Calu3 (cell line): ENCODE measurements at regions of chr1 and their contacts with region 1.

Region 1: DNA sequence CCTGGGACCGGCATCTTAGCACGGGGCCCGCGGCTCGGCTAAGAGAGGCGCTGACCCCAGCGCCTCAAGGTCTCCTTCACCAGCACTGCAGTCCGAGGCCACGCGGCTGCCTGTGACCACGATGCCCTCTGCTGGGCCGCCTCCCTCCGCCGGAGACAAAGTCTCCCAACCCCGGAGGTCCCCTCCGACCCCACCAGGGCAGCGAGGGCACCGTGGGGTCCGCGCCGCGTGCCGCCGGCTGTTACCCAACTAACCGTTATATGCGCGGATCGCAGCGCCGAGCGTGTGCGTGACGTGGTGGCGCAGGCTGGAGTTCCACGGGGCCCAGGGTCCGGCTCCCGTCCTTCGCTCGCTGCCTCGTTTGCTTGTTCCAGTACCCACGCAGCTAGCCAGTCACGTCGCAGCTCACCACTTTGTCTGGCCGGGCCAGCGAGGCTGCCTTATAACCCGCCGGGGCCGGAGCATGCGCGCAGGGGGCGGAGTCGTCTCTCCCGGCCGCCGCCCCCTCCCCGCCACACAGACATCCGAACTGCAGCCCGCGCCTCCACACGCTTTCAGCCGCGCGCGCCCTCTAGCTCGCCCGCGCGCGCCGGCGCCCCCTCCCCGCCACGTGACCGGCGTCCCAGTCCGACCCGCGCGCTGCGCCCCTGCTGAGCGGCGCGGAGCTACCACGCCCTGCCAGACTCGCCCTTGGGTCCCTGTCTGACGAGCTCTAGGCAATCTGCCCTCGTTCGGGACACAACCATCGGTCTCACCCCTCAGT is at the start of gene SLC16A1:
- DNase-seq: peak; percentile 87
- H3K4me3 Mint-ChIP-seq: peak within 1 kb of the TSS; percentile 100
- H3K27ac Mint-ChIP-seq: peak within 1 kb of the TSS; percentile 2
- H3K4me1 Mint-ChIP-seq: peaks cover 24% of the 10 kb centered on the region
- H3K27me3 Mint-ChIP-seq: no peaks in the 10 kb centered on the region
- CTCF ChIP-seq: no peak
- total RNA-seq, gene SLC16A1: 59.2 and 60.3 TPM in 2 replicates

Region 2: DNA sequence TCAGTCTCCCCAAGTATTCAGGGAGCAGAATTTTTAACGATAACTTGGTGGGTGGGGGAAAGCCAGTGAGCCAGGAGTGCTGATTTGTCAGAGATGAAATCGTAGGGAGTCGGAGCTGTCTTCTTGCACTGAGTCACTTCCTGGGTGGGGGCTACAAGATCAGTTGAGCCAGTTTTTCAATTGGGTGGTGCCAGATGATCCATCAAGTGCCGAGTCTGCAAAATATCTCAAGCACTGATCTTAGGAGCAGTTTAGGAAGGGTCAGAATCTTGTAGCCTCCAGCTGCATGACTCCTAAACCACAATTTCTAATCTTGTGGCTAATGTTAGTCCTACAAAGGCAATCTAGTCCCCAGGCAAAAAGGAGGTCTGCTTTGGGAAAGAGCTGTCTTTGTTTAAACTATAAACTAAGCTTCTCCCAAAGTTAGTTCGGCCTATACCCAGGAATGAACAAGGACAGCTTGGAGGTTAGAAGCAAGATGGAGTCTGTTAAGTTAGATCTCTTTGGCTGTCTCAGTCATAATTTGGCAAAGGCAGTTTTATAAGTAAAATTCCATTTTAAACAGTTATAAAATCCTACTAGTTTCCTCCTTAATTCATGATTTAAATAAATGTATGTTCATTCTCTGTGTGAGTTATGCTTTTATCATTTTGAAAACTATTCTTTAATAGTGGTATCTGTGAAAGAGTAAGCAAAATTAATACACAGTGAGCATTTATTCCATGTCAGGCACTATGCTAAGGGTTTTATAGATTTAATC is 51.7 kb before region 1 on chr1:
- CTCF ChIA-PET with region 1: no interaction called
- intact Hi-C with region 1: loop called (anchors 10 kb)
- DNase-seq: peak; percentile 31
- H3K4me3 Mint-ChIP-seq: peak overlapping the region; percentile 39
- H3K27ac Mint-ChIP-seq: peak overlapping the region; percentile 72
- H3K4me1 Mint-ChIP-seq: peaks cover 36% of the 10 kb centered on the region
- H3K27me3 Mint-ChIP-seq: no peaks in the 10 kb centered on the region
- CTCF ChIP-seq: no peak

Region 3: DNA sequence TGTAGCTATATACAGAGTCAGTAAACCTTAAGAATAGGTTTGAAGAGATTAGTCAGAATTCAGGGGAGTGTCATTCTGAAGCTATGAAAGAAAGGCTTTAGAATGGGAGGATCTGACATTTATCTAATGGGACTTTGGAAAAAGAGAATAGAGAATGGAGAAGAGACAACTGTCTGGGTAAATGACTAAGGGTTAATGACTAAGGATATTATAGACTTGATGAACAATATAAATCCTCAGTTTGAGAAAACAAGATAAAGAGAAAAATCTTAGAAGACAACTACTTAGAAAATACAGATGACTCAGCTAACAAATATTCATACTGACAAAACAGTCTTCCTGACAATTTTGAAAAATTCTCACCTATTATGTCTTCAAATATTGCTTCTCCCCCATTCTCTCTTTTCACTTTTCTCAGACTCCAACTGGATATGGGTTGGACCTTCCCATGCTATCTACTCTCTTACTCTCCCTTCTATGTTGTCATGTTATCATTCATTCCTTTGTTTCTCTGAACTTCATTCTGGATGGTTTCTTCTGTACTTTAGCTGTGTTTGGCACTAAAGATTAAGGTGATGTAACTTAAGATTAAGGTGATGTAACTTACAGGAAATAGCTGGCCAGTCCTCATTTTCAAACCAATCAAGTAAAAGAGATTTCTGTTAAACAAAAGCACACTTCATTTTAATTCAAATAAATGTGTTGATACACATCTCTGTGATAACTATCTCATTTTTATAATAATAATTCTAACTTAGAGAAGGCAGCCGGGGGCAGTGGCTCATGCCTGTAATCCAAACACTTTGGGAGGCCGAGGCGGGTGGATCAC is 20.3 kb before region 1 on chr1:
- CTCF ChIA-PET with region 1: interaction called, 4 read pairs
- intact Hi-C with region 1: loop called (anchors 2 kb)
- DNase-seq: no peak
- H3K4me3 Mint-ChIP-seq: peak overlapping the region; percentile 2
- H3K27ac Mint-ChIP-seq: peak overlapping the region; percentile 89
- H3K4me1 Mint-ChIP-seq: peaks cover 32% of the 10 kb centered on the region
- H3K27me3 Mint-ChIP-seq: no peaks in the 10 kb centered on the region
- CTCF ChIP-seq: no peak